ENCODE measurements at regions of chr3 and their contacts with region 1.

Region 1: GRCh38 chr3:63349583-63350521 is 71.7 kb downstream of the SYNPR start:
- DNase-seq: peak; percentile 43
- CTCF ChIP-seq: peak; percentile 71

Region 2: DNA sequence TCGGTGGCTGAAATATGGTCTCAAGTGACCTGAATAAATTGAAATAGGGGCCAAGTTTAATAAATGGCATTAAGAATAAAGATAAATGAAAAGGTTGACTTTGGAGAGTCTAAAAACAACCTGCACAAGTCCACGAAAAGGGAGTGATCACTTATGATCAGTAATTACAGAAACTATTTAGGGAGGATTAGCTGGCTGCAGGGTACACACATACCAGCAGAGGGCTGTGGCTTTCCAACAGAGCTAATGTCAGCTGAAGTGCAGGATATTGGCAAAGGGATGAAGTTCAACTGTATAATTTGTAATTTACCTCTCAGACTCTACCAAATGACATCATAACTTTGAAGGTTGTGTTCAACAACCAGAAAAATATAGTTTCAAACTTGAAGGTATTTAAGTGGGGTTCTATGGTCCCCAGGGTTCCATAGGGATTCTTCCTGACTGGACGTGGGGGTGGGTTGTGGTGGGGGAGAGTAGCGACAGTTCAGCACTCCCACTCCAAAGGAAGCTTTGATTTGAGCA is 15.1 kb after region 1 on chr3:
- CTCF ChIA-PET with region 1: interaction called, 30 read pairs
- POLR2A ChIA-PET with region 1: no interaction called
- DNase-seq: no peak
- CTCF ChIP-seq: no peak

Region 3: DNA sequence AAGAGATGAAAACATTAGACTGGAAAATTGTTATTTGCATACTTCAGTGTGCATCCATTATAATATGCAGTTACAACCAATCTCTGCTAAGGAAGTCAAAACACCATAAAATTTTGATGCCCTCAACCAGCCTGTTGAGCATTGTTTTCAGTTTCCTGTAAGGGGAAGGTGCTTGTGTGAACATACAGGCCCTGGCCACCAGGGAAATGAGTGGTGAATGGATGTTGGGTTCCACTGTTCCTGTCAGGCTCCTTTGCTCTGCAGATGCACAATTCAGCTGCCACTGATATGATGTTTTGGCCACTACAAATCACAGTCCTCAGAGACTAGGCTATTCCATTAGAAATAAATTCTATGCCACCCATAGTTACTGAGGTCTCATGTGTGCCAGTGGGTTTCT is 112.9 kb after region 1 on chr3:
- CTCF ChIA-PET with region 1: no interaction called
- POLR2A ChIA-PET with region 1: no interaction called
- DNase-seq: no peak
- CTCF ChIP-seq: no peak

Region 4: DNA sequence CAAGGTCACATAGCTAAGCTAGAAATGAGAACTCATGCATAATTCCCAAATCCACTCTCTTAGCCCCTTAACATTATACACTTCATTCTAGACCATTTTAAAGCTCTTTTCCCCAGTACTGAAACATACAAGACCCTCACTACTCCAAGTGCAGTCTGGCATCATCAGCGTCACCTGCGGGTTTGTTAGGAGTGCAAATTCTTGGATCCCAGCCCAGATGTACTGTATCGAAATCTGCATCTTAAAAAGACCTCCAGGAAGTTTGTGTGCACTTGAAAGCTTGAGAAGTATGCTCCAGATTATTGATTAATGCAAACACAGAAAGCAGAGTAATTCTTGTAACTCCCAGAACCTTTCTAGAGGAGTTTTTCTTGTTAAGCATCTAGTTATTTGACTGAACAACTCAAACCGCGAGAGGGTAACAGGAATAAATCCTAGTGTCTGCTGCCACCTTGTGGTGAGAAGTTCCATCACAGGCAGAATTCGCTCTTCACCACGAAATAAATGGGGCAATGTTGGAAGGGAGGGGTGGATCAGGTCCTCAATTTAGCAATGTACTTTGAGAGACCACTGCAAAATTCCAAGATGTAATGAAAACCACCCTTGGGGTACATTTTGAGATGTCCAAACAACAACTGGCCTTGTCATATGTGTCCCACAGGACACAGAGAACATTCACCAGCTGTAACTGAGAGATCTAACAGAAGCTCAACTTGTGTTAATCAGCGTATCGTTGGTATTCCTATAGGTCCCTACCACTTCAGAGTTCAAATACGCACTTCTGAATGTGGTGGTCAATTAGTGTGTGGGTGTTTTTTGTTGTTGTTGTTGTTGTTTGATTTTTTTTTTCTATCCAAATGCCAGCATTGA is 468.7 kb after region 1 on chr3:
- CTCF ChIA-PET with region 1: interaction called, 194 read pairs
- POLR2A ChIA-PET with region 1: no interaction called
- DNase-seq: peak; percentile 47
- CTCF ChIP-seq: peak; percentile 83

Region 5: GRCh38 chr3:63832395-63832794 is 482.5 kb after region 1 on chr3:
- CTCF ChIA-PET with region 1: interaction called, 10 read pairs
- POLR2A ChIA-PET with region 1: no interaction called
- DNase-seq: no peak
- CTCF ChIP-seq: no peak

Region 6: GRCh38 chr3:64484289-64484992 is 1134.6 kb after region 1 on chr3:
- CTCF ChIA-PET with region 1: interaction called, 24 read pairs
- POLR2A ChIA-PET with region 1: no interaction called
- DNase-seq: peak; percentile 69
- CTCF ChIP-seq: peak; percentile 83